Activated CD8-positive, alpha-beta T cell treated with anti-CD3 and anti-CD28 coated beads, Interleukin-2, amount 10 ng/mL, durations not matched to agents 7 days and 5 days (primary cell): ENCODE measurements at regions of chr10 and their contacts with region 1.

Region 1: DNA sequence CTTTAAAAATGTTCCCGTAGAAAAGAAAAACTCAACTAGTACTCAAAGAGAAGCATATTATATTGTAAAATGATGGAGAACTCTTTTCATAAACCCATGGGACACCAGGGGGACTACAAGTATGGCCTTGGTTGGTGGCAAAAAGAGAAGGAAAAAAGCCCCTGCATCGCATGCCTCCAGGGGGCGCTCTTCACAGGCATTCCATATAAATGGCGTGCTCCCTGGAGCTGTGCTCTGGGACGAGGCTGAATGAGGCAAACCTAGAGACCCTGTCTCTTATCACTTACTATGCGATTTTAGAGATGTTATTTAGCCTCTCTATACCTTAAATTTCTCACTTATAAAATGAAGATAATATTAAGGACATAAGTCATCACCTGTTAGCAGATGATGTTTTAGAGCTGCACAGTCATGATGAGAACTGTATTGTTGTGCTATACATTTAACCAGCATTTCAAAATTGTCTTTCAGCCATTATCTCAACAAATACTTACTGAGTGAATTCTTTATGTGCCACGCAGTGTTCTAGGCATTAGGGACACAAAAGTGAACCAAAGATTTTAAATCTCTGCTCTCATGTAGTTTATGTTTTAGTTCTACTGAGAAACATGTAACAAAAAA is 105.8 kb downstream of the ARHGAP21 start:
- DNase-seq: peak; percentile 61
- ATAC-seq: no peak
- H3K4me3 Mint-ChIP-seq: no peak overlapping the region
- H3K27ac Mint-ChIP-seq: no peak overlapping the region
- H3K4me1 Mint-ChIP-seq: peaks cover 10% of the 10 kb centered on the region
- H3K27me3 Mint-ChIP-seq: no peaks in the 10 kb centered on the region

Region 2: GRCh38 chr10:24553051-24553612 is 64.7 kb before region 1 on chr10:
- CTCF ChIA-PET with region 1: no interaction called
- POLR2A ChIA-PET with region 1: no interaction called
- DNase-seq: no peak
- ATAC-seq: no peak
- H3K4me3 Mint-ChIP-seq: no peak overlapping the region
- H3K27ac Mint-ChIP-seq: no peak overlapping the region
- H3K4me1 Mint-ChIP-seq: peaks cover 10% of the 10 kb centered on the region
- H3K27me3 Mint-ChIP-seq: peaks cover 2% of the 10 kb centered on the region

Region 3: DNA sequence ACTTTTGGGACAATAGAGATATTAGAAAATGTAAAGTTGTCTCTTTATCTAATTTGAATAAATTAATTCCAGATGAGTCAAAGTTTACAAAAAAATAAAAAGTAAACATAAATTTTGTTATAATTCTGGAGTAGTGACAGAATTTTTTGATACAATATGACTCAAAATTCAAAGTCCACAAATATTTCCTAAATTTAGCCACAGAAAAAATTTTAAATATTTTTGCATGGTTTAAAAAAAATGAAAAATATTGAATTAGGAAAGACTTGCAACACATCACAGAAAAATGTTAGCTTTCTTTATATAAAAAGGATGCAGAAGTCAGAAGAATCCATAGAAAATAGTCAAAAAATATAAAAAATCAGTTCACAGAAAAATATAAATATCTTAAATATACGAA is 11.9 kb before region 1 on chr10:
- CTCF ChIA-PET with region 1: interaction called, 33 read pairs
- POLR2A ChIA-PET with region 1: interaction called, 3 read pairs
- DNase-seq: no peak
- ATAC-seq: no peak
- H3K4me3 Mint-ChIP-seq: no peak overlapping the region
- H3K27ac Mint-ChIP-seq: no peak overlapping the region
- H3K4me1 Mint-ChIP-seq: peaks cover 9% of the 10 kb centered on the region
- H3K27me3 Mint-ChIP-seq: no peaks in the 10 kb centered on the region

Region 4: DNA sequence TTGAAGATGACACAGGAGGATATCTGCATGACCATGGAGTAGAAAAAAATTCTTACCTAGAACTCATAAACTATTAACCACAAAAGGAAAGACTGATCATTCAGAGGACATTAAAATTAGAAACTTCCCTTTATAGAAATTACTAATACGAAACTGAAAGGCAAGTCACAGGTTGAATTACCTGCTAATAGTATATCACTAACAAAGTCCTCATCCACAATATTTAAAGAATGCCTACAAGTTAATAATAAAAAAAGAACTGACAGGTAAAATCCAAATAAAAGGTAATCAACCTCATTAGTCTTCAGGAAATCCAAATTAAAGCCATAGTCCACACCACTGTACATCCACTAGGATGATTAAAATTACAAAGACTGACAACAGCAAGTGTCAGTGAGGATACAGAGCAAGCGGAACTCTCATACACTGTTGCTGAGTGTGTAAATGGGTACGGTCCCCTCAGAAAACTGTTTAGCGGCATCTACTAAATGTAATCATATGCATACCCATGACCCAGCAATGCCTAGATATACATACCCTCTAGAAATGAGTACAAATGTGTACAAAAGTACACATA is 34.6 kb after region 1 on chr10:
- CTCF ChIA-PET with region 1: no interaction called
- POLR2A ChIA-PET with region 1: no interaction called
- DNase-seq: no peak
- ATAC-seq: no peak
- H3K4me3 Mint-ChIP-seq: no peak overlapping the region
- H3K27ac Mint-ChIP-seq: no peak overlapping the region
- H3K4me1 Mint-ChIP-seq: peaks cover 2% of the 10 kb centered on the region
- H3K27me3 Mint-ChIP-seq: no peaks in the 10 kb centered on the region

Region 5: GRCh38 chr10:25080880-25081581 is 463.1 kb after region 1 on chr10:
- CTCF ChIA-PET with region 1: interaction called, 27 read pairs
- POLR2A ChIA-PET with region 1: no interaction called
- DNase-seq: peak; percentile 69
- ATAC-seq: peak; percentile 88
- H3K4me3 Mint-ChIP-seq: no peak overlapping the region
- H3K27ac Mint-ChIP-seq: no peak overlapping the region
- H3K4me1 Mint-ChIP-seq: peaks cover 6% of the 10 kb centered on the region
- H3K27me3 Mint-ChIP-seq: peaks cover 12% of the 10 kb centered on the region